Naive thymus-derived CD4-positive, alpha-beta T cell (primary cell): ENCODE measurements at regions of chr13 and their contacts with region 1.

Region 1: DNA sequence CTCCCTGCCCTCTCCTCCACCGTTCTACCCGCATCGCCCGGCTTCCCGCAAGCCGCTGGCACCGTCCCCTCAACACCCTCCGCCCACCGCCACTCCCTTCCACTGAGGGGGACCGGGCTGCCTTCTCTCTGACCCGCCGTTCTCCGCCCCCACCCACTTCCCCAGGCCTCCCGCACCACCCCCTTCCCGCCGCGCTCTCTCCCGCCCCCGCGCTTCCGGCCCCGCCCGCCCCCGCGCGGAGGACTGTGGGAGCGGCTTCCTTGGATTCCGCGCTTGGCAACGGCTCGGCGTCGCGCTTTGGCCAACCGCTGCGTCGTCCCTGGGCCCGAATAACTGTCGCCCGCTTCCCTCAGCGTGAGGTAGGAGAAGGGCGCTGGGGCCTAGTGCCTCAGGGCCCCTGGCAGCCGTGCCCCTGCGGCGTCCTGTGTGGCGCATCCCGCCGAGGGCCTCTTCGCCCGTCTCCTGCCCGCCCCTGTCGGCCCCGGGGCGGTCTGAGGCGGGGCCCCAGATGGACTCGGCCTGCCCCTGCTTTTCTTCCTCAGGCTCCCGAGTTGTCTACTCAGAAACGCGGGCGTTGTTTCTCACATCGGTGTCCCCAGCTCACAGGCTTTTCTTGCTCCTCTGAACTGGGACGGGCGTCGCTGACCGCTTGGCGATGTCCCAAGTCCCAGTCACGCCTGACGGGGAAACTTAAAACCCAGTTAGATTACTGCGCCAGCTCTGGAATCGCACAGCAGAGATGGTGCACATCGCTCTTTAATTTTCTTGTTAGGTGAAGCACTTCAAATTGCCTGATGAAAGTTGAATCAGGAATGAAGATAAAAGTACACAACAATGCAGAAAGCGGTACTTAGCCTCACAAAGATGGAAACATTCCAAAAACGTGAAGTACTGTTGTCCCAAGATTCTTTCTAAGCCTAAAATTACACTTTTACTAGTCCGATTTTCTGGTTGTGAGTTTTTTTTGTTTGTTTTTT is at the start of gene IFT88:
- DNase-seq: peak; percentile 72 to 87 (median 80)
- ATAC-seq: peak; percentile 94
- H3K4me3 ChIP-seq: peak within 1 kb of the TSS; percentile 52
- H3K4me3 Mint-ChIP-seq: peak within 1 kb of the TSS; percentile 88 to 97 (median 93)
- H3K27ac ChIP-seq: peak within 1 kb of the TSS; percentile 73
- H3K27ac Mint-ChIP-seq: peak within 1 kb of the TSS; percentile 92 to 94 (median 93)
- H3K4me1 ChIP-seq: peaks cover 0 to 8% of the 10 kb centered on the region in 2 donors
- H3K4me1 Mint-ChIP-seq: peaks cover 7 to 18% (median 17%) of the 10 kb centered on the region in 7 donors
- H3K27me3 ChIP-seq: no peaks in the 10 kb centered on the region
- H3K27me3 Mint-ChIP-seq: no peaks in the 10 kb centered on the region
- total RNA-seq, gene IFT88: 5.0 to 17.0 (median 11.7) TPM

Region 2: GRCh38 chr13:19782049-19782726 is 785.0 kb before region 1 on chr13:
- CTCF ChIA-PET with region 1: no interaction called
- POLR2A ChIA-PET with region 1: no interaction called
- intact Hi-C with region 1: loop called in 1 of 2 experiments (anchors 2 kb)
- DNase-seq: peak; percentile 26 to 61 (median 49)
- ATAC-seq: peak; percentile 63
- H3K4me3 ChIP-seq: peak overlapping the region; percentile 99
- H3K4me3 Mint-ChIP-seq: peak overlapping the region; percentile 96 to 100 (median 98)
- H3K27ac ChIP-seq: peak overlapping the region; percentile 98
- H3K27ac Mint-ChIP-seq: peak overlapping the region; percentile 96 to 100 (median 99)
- H3K4me1 ChIP-seq: peaks cover 0 to 8% of the 10 kb centered on the region in 2 donors
- H3K4me1 Mint-ChIP-seq: peaks cover 0 to 13% (median 10%) of the 10 kb centered on the region in 7 donors
- H3K27me3 ChIP-seq: no peaks in the 10 kb centered on the region
- H3K27me3 Mint-ChIP-seq: peaks cover 0 to 5% (median 0%) of the 10 kb centered on the region in 5 donors

Region 3: DNA sequence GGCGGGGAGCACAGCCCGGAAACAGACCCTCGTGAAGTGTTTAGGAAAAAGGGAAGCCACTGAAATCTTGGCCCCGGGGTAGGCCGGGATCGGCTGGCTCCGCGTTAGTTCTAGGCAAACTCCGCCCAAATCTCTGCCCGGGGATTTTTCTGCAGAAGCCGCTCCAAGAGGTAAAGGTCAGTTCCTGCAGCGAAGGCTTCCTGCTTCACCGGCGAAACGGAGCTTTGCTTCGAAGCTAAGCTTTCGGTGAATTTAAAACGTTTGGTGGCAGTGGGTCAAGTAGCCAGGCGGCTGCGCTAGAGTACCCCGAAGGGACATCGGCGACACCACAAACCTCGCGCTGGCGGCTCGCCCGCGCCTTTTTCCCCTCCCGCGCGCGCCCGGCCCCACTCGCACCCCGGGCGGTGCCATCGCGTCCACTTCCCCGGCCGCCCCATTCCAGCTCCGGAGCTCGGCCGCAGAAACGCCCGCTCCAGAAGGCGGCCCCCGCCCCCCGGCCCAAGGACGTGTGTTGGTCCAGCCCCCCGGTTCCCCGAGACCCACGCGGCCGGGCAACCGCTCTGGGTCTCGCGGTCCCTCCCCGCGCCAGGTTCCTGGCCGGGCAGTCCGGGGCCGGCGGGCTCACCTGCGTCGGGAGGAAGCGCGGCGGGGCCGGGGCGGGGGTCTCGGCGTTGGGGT is 374.9 kb before region 1 on chr13:
- CTCF ChIA-PET with region 1: no interaction called
- POLR2A ChIA-PET with region 1: no interaction called
- intact Hi-C with region 1: loop called (anchors 5 to 10 kb)
- DNase-seq: peak in 2 of 9 donors; percentile 10 to 11
- ATAC-seq: no peak
- H3K4me3 ChIP-seq: peak overlapping the region; percentile 19
- H3K4me3 Mint-ChIP-seq: peak overlapping the region; percentile 63 to 86 (median 73)
- H3K27ac ChIP-seq: no peak overlapping the region
- H3K27ac Mint-ChIP-seq: no peak overlapping the region
- H3K4me1 ChIP-seq: peaks cover 11 to 24% of the 10 kb centered on the region in 2 donors
- H3K4me1 Mint-ChIP-seq: peaks cover 18 to 31% (median 21%) of the 10 kb centered on the region in 7 donors
- H3K27me3 ChIP-seq: peaks cover 27 to 46% of the 10 kb centered on the region in 2 donors
- H3K27me3 Mint-ChIP-seq: peaks cover 42 to 76% (median 57%) of the 10 kb centered on the region in 5 donors

Region 4: DNA sequence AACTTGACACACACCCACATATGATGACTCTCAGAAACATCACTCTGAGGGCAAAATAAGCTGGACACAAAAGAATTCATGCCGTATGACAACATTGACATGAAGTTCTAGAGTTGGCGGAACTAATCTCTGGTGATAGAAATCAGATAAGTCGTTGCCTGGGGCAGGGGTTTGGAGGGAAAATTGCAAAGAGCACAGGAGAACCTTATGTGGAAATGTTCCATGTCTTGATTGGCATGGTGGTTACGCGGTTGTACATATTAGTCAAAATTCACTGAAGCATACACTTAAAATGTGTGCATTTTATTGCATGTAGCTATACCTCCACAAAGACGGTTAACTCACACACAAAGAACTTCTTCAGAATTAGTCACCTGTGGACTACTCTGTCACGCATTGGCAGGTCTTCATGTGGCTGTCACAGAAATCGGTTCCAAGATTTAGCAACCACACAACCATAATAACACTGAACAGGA is 197.3 kb before region 1 on chr13:
- CTCF ChIA-PET with region 1: no interaction called
- POLR2A ChIA-PET with region 1: no interaction called
- intact Hi-C with region 1: no loop called
- DNase-seq: no peak
- ATAC-seq: no peak
- H3K4me3 ChIP-seq: no peak overlapping the region
- H3K4me3 Mint-ChIP-seq: no peak overlapping the region
- H3K27ac ChIP-seq: no peak overlapping the region
- H3K27ac Mint-ChIP-seq: no peak overlapping the region
- H3K4me1 ChIP-seq: no peaks in the 10 kb centered on the region
- H3K4me1 Mint-ChIP-seq: peaks cover 0 to 5% (median 0%) of the 10 kb centered on the region in 7 donors
- H3K27me3 ChIP-seq: no peaks in the 10 kb centered on the region
- H3K27me3 Mint-ChIP-seq: peaks cover 0 to 38% (median 4%) of the 10 kb centered on the region in 5 donors

Region 5: GRCh38 chr13:20495082-20496023 is 71.8 kb before region 1 on chr13:
- CTCF ChIA-PET with region 1: interaction called, 4 read pairs
- POLR2A ChIA-PET with region 1: no interaction called
- intact Hi-C with region 1: loop called (anchors 1 to 2 kb)
- DNase-seq: peak in 8 of 9 donors; percentile 41 to 75 (median 70)
- ATAC-seq: peak; percentile 95
- H3K4me3 ChIP-seq: no peak overlapping the region
- H3K4me3 Mint-ChIP-seq: no peak overlapping the region
- H3K27ac ChIP-seq: no peak overlapping the region
- H3K27ac Mint-ChIP-seq: peak overlapping the region in 5 of 9 donors; percentile 29 to 87 (median 52)
- H3K4me1 ChIP-seq: no peaks in the 10 kb centered on the region
- H3K4me1 Mint-ChIP-seq: peaks cover 5 to 17% (median 13%) of the 10 kb centered on the region in 7 donors
- H3K27me3 ChIP-seq: no peaks in the 10 kb centered on the region
- H3K27me3 Mint-ChIP-seq: no peaks in the 10 kb centered on the region

Region 6: DNA sequence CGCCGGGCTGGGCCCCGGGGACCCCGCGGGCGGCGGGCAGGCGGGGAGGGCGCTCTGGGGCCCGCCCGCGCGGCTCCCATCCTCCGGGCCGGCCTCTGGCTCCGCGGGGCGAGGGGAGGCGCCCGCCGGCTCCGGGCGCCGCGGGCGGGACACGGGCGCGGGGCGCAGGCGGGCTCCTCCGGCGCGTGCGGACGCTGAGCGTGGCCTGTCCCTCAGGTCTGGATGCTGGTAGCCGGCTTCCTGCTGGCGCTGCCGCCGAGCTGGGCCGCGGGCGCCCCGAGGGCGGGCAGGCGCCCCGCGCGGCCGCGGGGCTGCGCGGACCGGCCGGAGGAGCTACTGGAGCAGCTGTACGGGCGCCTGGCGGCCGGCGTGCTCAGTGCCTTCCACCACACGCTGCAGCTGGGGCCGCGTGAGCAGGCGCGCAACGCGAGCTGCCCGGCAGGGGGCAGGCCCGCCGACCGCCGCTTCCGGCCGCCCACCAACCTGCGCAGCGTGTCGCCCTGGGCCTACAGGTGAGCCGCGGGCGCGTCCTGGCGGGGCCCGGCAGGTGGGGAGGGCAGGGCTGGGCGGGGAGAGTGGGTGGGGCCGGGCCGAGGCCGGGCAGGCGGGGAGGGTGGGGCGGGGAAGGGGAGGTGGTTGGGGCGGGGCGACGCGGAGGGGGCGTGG is 136.7 kb after region 1 on chr13:
- CTCF ChIA-PET with region 1: no interaction called
- POLR2A ChIA-PET with region 1: no interaction called
- intact Hi-C with region 1: loop called (anchors 1 kb)
- DNase-seq: peak; percentile 70 to 84 (median 80)
- ATAC-seq: peak; percentile 93
- H3K4me3 ChIP-seq: no peak overlapping the region
- H3K4me3 Mint-ChIP-seq: peak overlapping the region in 4 of 10 donors; percentile 59 to 97 (median 72)
- H3K27ac ChIP-seq: no peak overlapping the region
- H3K27ac Mint-ChIP-seq: peak overlapping the region in 1 of 9 donors; percentile 56
- H3K4me1 ChIP-seq: peaks cover 3 to 8% of the 10 kb centered on the region in 2 donors
- H3K4me1 Mint-ChIP-seq: peaks cover 0 to 13% (median 8%) of the 10 kb centered on the region in 7 donors
- H3K27me3 ChIP-seq: peaks cover 0 to 5% of the 10 kb centered on the region in 2 donors
- H3K27me3 Mint-ChIP-seq: peaks cover 13 to 48% (median 17%) of the 10 kb centered on the region in 5 donors

Region 7: GRCh38 chr13:20902438-20903163 is 335.4 kb after region 1 on chr13 and contains the start of gene XPO4:
- CTCF ChIA-PET with region 1: no interaction called
- POLR2A ChIA-PET with region 1: no interaction called
- intact Hi-C with region 1: loop called (anchors 1 kb)
- DNase-seq: peak; percentile 68 to 85 (median 77)
- ATAC-seq: peak; percentile 97
- H3K4me3 ChIP-seq: peak within 1 kb of the TSS; percentile 98
- H3K4me3 Mint-ChIP-seq: peak within 1 kb of the TSS; percentile 93 to 98 (median 96)
- H3K27ac ChIP-seq: peak within 1 kb of the TSS; percentile 83
- H3K27ac Mint-ChIP-seq: peak within 1 kb of the TSS; percentile 89 to 98 (median 95)
- H3K4me1 ChIP-seq: peaks cover 10 to 21% of the 10 kb centered on the region in 2 donors
- H3K4me1 Mint-ChIP-seq: peaks cover 15 to 41% (median 32%) of the 10 kb centered on the region in 7 donors
- H3K27me3 ChIP-seq: no peaks in the 10 kb centered on the region
- H3K27me3 Mint-ChIP-seq: peaks cover 0 to 3% (median 0%) of the 10 kb centered on the region in 5 donors
- total RNA-seq, gene XPO4: 20.9 to 26.5 (median 23.5) TPM

Region 8: DNA sequence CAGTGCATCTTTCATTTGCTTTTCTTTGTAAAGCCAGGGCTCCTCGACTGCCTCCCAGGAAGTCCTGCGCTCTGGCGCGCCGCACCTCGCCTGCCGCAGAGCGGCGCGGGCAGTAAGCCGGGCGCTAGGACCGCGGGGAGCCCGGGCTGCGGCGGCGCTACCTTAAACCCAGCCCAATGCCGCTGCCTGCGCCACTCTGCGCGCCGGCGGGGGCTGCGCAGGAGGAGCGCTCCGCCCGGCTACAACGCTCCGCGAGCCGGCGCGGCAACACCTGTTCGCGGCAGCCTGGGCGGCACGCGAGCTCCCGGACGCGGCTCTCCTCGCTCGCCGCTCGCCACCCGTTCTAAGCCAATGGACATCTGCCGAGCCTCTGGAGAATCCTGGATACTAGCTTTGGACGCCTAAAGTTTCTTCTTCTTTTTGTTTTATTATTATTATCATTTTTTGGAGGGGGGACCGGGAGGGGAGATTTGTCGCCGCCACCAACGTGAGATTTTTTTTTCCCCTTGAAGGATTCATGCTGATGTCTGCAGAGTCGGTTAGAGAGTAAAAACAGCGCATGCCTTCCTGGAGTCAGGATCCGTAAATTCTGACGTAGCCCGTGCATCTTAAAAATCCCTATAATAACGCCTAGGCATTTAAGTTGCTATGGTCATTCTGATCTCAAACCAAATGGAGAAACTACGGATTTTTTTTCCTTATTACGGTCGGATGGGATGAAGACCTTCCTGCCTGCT is 1103.9 kb after region 1 on chr13 and contains the start of gene FGF9:
- CTCF ChIA-PET with region 1: no interaction called
- POLR2A ChIA-PET with region 1: no interaction called
- intact Hi-C with region 1: loop called in 1 of 2 experiments (anchors 2 kb)
- DNase-seq: peak; percentile 76 to 88 (median 86)
- ATAC-seq: peak; percentile 89
- H3K4me3 ChIP-seq: peak within 1 kb of the TSS; percentile 92
- H3K4me3 Mint-ChIP-seq: peak within 1 kb of the TSS; percentile 88 to 98 (median 93)
- H3K27ac ChIP-seq: peak within 1 kb of the TSS; percentile 48
- H3K27ac Mint-ChIP-seq: peak within 1 kb of the TSS; percentile 61 to 94 (median 78)
- H3K4me1 ChIP-seq: peaks cover 19 to 32% of the 10 kb centered on the region in 2 donors
- H3K4me1 Mint-ChIP-seq: peaks cover 27 to 45% (median 44%) of the 10 kb centered on the region in 7 donors
- H3K27me3 ChIP-seq: peaks cover 0 to 4% of the 10 kb centered on the region in 2 donors
- H3K27me3 Mint-ChIP-seq: peaks cover 5 to 77% (median 20%) of the 10 kb centered on the region in 5 donors
- total RNA-seq, gene FGF9: 0.19 to 5.6 (median 2.0) TPM